ENCODE measurements at regions of chr10 and their contacts with region 1.

Region 1: GRCh38 chr10:104925232-104925851 is 284.3 kb downstream of the SORCS3 start:
- DNase-seq: peak; percentile 47
- H3K4me3 ChIP-seq: peak overlapping the region in 1 of 2 experiments; percentile 43; a peak in 1 of 4 replicates
- H3K27ac ChIP-seq: no peak overlapping the region
- H3K4me1 ChIP-seq: no peaks in the 10 kb centered on the region
- H3K27me3 ChIP-seq: no peaks in the 10 kb centered on the region
- CTCF ChIP-seq: peak; percentile 42
- EP300 ChIP-seq: no peak
- RAD21 ChIP-seq: peak; percentile 73

Region 2: GRCh38 chr10:104657457-104657856 is 267.9 kb before region 1 on chr10:
- CTCF ChIA-PET with region 1: interaction called, 10 read pairs
- POLR2A ChIA-PET with region 1: no interaction called
- DNase-seq: no peak
- H3K4me3 ChIP-seq: no peak overlapping the region
- H3K27ac ChIP-seq: no peak overlapping the region
- H3K4me1 ChIP-seq: no peaks in the 10 kb centered on the region
- H3K27me3 ChIP-seq: no peaks in the 10 kb centered on the region
- CTCF ChIP-seq: no peak
- EP300 ChIP-seq: no peak
- RAD21 ChIP-seq: no peak

Region 3: DNA sequence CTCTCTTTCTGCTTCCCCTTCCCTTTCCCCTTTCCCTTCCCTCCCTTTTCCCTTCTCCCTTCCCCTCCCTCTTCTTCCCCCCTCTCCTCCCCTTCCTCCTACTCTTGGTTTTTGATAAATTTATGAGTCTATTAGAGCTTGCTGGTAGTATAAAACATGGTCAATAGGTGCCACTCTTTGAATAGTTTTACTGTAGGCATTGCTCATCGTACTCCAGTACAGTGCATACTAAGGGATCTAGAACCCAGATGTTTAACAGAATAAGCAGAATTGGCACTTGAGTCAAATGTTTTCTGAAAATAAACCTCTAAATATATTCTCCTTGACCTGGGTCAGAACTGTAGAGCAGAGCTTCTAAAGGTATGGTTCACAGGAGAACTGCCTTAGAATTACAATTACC is 157.6 kb before region 1 on chr10:
- CTCF ChIA-PET with region 1: interaction called, 19 read pairs
- POLR2A ChIA-PET with region 1: no interaction called
- DNase-seq: no peak
- H3K4me3 ChIP-seq: no peak overlapping the region
- H3K27ac ChIP-seq: no peak overlapping the region
- H3K4me1 ChIP-seq: no peaks in the 10 kb centered on the region; a peak in 1 of 4 replicates
- H3K27me3 ChIP-seq: no peaks in the 10 kb centered on the region
- CTCF ChIP-seq: no peak
- EP300 ChIP-seq: no peak
- RAD21 ChIP-seq: peak; percentile 51

Region 4: DNA sequence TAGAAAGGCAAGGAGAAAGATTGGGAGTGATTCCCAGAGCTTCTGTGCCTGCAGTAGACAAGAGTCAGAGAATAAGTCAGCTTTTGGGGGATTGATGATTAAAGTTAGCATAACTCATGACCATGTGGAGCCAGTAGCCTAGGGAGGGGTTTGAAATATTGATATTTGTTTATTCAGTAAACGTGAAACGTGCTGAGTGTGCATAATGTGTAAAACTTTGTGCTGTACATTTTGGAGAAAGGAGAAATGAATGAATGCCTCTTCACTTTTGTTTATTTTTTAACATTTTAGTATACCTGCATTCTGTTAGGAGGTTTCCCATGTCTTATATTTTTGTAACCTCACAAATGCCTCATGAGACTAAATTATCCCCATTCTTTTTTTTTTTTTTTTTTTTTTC is 12.0 kb before region 1 on chr10:
- CTCF ChIA-PET with region 1: interaction called, 25 read pairs
- POLR2A ChIA-PET with region 1: no interaction called
- DNase-seq: no peak
- H3K4me3 ChIP-seq: no peak overlapping the region
- H3K27ac ChIP-seq: no peak overlapping the region
- H3K4me1 ChIP-seq: no peaks in the 10 kb centered on the region
- H3K27me3 ChIP-seq: no peaks in the 10 kb centered on the region
- CTCF ChIP-seq: no peak
- EP300 ChIP-seq: no peak
- RAD21 ChIP-seq: no peak

Region 5: DNA sequence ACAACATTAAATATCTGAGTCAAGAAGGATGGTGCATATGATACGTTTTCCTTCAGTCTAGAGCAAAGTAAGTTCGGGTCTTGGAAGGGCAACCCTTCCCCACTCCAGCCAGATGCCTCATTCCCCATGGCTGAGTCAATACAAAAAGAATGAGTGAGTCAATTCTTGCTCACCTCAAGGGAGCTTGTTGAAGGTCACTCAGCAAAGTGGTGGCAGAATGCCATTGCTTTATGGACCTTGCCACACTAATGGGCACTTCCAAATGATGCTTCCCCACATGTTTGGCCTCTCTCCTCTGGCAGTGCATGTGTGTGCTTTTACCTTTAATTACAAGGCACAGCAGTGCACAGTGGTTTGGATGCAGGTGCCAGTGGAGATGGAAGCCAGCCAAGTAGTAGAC is 12.2 kb after region 1 on chr10:
- CTCF ChIA-PET with region 1: interaction called, 11 read pairs
- POLR2A ChIA-PET with region 1: no interaction called
- DNase-seq: no peak
- H3K4me3 ChIP-seq: no peak overlapping the region
- H3K27ac ChIP-seq: no peak overlapping the region
- H3K4me1 ChIP-seq: no peaks in the 10 kb centered on the region
- H3K27me3 ChIP-seq: no peaks in the 10 kb centered on the region
- CTCF ChIP-seq: no peak
- EP300 ChIP-seq: no peak
- RAD21 ChIP-seq: no peak

Region 6: DNA sequence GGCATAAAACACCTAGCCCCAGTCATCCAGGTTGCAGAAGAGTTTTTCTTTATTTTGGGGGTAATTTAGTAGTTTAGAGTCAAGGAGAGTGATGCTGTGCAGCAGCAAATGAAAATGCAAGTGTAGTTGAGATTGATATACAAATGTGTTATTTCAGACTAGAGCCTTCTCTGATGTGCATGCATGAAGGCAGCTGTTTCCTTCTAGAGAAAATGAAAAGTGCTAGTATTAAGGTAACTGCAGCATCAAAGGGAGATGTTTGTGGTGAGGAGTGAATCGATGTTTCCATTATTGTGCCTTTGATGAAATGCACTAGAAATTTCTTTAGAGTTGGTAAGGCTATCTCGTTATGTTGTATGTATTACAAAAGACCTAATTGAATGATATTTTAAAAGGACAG is 55.0 kb after region 1 on chr10:
- CTCF ChIA-PET with region 1: no interaction called
- POLR2A ChIA-PET with region 1: no interaction called
- DNase-seq: no peak
- H3K4me3 ChIP-seq: no peak overlapping the region
- H3K27ac ChIP-seq: no peak overlapping the region
- H3K4me1 ChIP-seq: no peaks in the 10 kb centered on the region
- H3K27me3 ChIP-seq: no peaks in the 10 kb centered on the region
- CTCF ChIP-seq: no peak
- EP300 ChIP-seq: no peak
- RAD21 ChIP-seq: no peak